HepG2 (cell line): ENCODE measurements at regions of chr4 and their contacts with region 1.

Region 1: DNA sequence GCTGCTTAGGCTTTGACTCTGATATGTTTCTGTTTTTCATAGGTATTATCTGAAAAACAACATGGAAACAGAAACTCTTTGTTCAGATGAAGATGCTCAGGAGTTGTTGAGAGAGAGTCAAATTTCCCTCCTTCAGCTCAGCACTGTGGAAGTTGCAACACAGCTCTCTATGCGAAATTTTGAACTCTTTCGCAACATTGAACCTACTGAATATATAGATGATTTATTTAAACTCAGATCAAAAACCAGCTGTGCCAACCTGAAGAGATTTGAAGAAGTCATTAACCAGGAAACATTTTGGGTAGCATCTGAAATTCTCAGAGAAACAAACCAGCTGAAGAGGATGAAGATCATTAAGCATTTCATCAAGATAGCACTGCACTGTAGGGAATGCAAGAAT is 238.6 kb downstream of the RAPGEF2 start:
- DNase-seq: peak; percentile 69
- ATAC-seq: peak; percentile 79
- H3K4me3 ChIP-seq: no peak overlapping the region
- H3K27ac ChIP-seq: no peak overlapping the region
- H3K4me1 ChIP-seq: peaks cover 17% of the 10 kb centered on the region
- H3K27me3 ChIP-seq: no peaks in the 10 kb centered on the region
- CTCF ChIP-seq: no peak
- EP300 ChIP-seq: peak in 1 of 2 experiments; percentile 37; a peak in 1 of 4 replicates
- POLR2A ChIP-seq: no peak
- RAD21 ChIP-seq: no peak

Region 2: DNA sequence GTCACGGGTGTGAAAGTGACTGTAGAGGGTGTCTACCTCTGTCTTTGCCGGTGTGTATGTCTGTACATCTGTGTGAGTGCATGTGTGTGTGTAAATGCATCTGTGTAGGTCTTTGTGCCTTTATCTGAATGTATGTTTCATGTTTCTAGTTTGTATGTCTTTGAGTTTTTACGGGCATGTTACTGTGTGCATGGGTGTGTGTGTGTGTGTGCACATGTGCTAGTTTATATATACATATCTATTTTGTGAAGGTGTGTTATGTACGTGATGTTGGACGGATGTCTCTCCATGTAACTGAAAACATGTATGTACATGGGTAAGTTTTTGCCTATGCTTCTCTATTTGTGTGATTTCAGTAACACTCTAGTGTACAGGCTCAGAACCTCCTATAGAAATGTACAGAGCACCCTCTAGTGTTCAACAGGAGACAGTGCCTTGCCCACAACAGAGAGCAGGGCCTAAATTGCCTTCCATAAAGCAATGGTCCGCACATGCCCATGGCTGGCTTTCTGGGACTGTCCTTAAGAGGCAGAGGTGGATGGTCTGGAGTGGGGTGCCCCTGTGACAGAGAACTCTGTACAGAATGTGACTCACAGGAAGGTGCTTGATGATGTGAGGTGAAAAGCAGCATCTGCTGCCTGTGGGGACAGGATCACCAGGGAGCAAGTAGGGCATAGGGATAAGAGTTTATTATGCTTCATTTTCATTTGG is 104.9 kb after region 1 on chr4:
- CTCF ChIA-PET with region 1: no interaction called
- POLR2A ChIA-PET with region 1: no interaction called
- in situ Hi-C with region 1: no loop called
- intact Hi-C with region 1: loop called (anchors 1 kb)
- DNase-seq: peak; percentile 72
- ATAC-seq: peak; percentile 100
- H3K4me3 ChIP-seq: no peak overlapping the region
- H3K27ac ChIP-seq: no peak overlapping the region
- H3K4me1 ChIP-seq: peaks cover 6% of the 10 kb centered on the region; the same call in 1 of the 2 replicates
- H3K27me3 ChIP-seq: no peaks in the 10 kb centered on the region
- CTCF ChIP-seq: peak; percentile 93
- EP300 ChIP-seq: no peak
- POLR2A ChIP-seq: no peak
- RAD21 ChIP-seq: peak; percentile 87

Region 3: GRCh38 chr4:159463235-159463634 is 121.7 kb after region 1 on chr4:
- CTCF ChIA-PET with region 1: no interaction called
- POLR2A ChIA-PET with region 1: no interaction called
- in situ Hi-C with region 1: no loop called
- intact Hi-C with region 1: no loop called
- DNase-seq: no peak
- ATAC-seq: peak; percentile 52; the same call in 1 of the 3 replicates
- H3K4me3 ChIP-seq: no peak overlapping the region
- H3K27ac ChIP-seq: no peak overlapping the region
- H3K4me1 ChIP-seq: no peaks in the 10 kb centered on the region
- H3K27me3 ChIP-seq: no peaks in the 10 kb centered on the region; a peak in 1 of 5 replicates
- CTCF ChIP-seq: no peak
- EP300 ChIP-seq: no peak
- POLR2A ChIP-seq: no peak
- RAD21 ChIP-seq: no peak

Region 4: GRCh38 chr4:159562366-159562765 is 220.8 kb after region 1 on chr4:
- CTCF ChIA-PET with region 1: no interaction called
- POLR2A ChIA-PET with region 1: no interaction called
- in situ Hi-C with region 1: no loop called
- intact Hi-C with region 1: no loop called
- DNase-seq: no peak
- ATAC-seq: no peak
- H3K4me3 ChIP-seq: no peak overlapping the region
- H3K27ac ChIP-seq: no peak overlapping the region
- H3K4me1 ChIP-seq: 0 out of 2 replicates have a peak, but pooled peaks cover 6% of the 10 kb centered on the region
- H3K27me3 ChIP-seq: no peaks in the 10 kb centered on the region
- CTCF ChIP-seq: no peak
- EP300 ChIP-seq: no peak
- POLR2A ChIP-seq: no peak
- RAD21 ChIP-seq: no peak

Region 5: GRCh38 chr4:159582685-159583084 is 241.2 kb after region 1 on chr4:
- CTCF ChIA-PET with region 1: no interaction called
- POLR2A ChIA-PET with region 1: no interaction called
- in situ Hi-C with region 1: no loop called
- intact Hi-C with region 1: no loop called
- DNase-seq: no peak
- ATAC-seq: no peak
- H3K4me3 ChIP-seq: no peak overlapping the region
- H3K27ac ChIP-seq: no peak overlapping the region
- H3K4me1 ChIP-seq: no peaks in the 10 kb centered on the region
- H3K27me3 ChIP-seq: no peaks in the 10 kb centered on the region
- CTCF ChIP-seq: no peak
- EP300 ChIP-seq: no peak
- POLR2A ChIP-seq: no peak
- RAD21 ChIP-seq: no peak